ENCODE measurements at regions of chr11 and their contacts with region 1.

Region 1: DNA sequence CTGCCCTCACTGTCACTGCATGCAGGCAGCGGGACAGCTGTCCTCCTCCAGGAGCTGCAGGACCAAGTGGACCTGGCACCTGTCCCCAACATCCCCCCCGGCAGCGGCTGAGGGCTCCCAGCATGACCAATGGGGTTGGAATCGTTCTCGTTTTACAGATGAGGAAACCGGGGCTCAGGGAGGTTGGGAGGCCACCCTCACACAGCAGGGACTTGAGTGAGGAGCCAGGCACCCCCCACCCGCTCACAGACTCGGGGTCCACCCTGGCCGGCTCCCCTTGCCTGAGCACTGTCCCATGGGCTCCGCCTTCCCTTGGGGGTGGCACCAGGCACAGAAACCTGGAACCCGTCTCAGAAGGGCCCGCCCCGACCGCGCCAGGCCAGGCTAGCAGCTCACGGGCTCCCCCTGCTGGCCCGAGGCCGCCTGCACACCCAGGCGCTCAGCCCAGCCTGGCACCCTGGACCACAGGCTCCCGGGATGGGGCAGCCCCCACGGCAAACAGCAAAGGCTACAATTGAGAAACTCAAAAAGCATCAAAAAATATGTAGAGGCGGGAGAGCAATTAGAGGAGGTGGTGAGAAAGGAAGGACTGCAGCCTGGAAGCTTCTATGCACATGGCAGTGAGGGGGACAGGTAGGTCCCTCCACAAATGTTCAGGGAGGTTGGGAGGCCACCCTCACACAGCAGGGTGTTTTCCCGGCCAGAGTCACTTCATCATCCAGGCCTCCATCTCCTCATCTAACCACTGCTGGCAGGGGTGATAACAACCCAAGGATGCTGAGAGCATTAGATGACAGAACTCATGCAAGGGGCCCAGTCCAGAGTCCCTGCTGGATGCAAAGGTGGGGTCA is 12.8 kb downstream of the MACROD1 start:
- DNase-seq: no peak
- H3K4me3 ChIP-seq: no peak overlapping the region
- CTCF ChIP-seq: peak; percentile 99

Region 2: DNA sequence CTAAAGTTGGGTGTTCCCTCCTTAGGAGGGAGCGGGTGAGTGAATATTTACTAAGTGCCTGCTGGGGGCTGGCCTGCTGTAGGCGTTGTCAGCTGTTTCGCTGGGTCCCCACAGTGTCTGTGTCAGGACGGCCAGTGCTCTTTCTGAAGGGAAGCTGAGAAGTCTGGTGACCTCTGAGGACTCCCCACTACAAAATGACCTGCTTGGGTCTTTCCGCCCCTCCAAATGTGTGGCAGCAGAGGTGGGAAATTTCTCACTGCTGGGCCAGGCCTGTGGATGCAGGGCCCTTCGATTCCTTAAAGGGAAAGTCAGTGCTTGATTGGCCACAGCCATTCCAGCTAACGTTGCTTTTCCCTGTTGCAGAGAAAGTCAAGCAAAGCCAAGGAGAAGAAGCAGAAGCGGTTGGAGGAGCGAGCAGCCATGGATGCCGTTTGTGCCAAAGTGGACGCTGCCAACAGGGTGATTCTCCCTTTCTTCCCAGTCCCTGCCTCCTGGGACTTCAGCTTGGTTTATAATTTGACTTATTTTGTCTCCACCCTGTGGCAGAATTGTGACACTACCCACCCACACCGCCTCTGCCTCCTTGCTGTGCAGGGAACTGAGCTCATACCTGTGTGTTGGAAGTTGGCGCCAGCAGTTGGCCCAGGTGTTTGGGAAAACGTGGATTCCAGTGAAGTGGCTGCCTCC is 207.4 kb before region 1 on chr11:
- CTCF ChIA-PET with region 1: interaction called, 11 read pairs
- POLR2A ChIA-PET with region 1: no interaction called
- DNase-seq: peak; percentile 24
- H3K4me3 ChIP-seq: no peak overlapping the region
- CTCF ChIP-seq: peak; percentile 70

Region 3: DNA sequence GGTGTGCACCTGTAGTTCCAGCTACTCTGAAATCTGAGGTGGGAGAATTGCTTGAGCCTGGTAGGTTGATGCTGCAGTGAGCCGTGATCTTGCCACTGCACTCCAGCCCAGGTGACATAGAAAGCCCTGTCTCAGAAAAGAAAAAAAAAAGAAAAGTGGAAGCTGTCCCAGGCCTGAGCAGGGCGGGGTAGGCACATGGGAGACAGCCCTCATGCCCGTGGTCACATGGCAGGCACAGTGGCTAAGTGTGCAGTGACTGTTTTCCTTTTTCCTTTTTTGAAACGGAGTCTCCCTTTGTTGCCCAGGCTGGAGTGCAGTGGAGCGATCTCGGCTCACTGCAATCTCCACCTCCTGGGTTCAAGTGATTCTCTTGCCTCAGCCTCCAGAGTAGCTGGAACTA is 159.1 kb before region 1 on chr11:
- CTCF ChIA-PET with region 1: interaction called, 591 read pairs
- POLR2A ChIA-PET with region 1: no interaction called
- DNase-seq: no peak
- H3K4me3 ChIP-seq: no peak overlapping the region
- CTCF ChIP-seq: no peak

Region 4: GRCh38 chr11:64015935-64016845 is 136.9 kb before region 1 on chr11:
- CTCF ChIA-PET with region 1: interaction called, 12 read pairs
- POLR2A ChIA-PET with region 1: no interaction called
- DNase-seq: no peak
- H3K4me3 ChIP-seq: no peak overlapping the region
- CTCF ChIP-seq: no peak

Region 5: DNA sequence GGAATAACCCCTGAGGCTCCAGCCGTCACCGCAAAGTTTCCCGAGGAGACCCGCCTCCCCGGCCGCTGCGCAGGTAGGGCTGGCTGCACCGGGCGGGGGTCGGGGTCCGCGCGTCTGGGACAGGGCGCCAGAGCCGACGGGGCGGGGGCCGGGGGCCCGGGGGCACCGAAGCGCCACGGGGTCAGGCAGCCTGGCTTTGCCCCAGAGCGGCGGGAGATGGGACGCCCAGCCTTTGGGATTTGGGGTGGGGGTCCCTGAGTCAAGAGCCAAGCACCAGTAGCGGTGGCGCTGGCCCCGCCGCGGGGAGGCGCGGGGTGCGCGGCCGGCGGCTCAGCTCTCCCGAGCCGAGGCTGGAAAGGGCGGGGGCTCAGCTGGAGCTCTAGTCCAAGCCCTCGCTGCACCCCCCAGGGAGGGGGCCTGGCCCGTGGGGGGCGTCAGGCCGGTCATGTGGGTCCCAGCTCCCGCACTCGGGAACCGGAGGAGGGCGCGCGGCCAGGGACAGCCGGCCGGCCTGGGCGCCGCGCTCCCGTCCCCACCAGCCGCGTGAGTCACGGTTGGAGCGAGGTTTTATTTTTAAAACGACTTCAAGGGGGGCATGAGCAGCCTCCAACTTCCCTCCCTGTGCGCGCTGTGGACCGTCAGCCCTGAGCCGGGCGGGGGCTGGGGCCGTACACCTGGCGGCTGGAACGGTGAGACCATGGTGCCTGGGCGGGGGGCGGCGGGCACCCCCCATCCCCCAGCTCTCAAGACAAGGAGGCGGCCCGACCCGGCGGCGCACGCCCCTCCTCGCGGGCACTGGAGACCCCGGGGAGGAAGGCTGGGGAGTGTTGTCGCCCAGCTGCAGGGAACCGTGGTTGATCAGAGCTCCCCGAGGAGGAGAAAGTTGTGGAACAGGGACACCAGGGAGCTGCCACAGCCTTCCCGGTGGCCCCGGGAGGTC is 116.7 kb before region 1 on chr11:
- CTCF ChIA-PET with region 1: interaction called, 60 read pairs
- POLR2A ChIA-PET with region 1: no interaction called
- DNase-seq: no peak
- H3K4me3 ChIP-seq: peak overlapping the region; percentile 54
- CTCF ChIP-seq: no peak

Region 6: GRCh38 chr11:64131683-64132190 is 21.3 kb before region 1 on chr11:
- CTCF ChIA-PET with region 1: interaction called, 67 read pairs
- POLR2A ChIA-PET with region 1: no interaction called
- DNase-seq: no peak
- H3K4me3 ChIP-seq: no peak overlapping the region
- CTCF ChIP-seq: no peak

Region 7: GRCh38 chr11:64165849-64166635 is 13.0 kb after region 1 on chr11 and contains the start of gene MACROD1:
- CTCF ChIA-PET with region 1: interaction called, 96 read pairs
- POLR2A ChIA-PET with region 1: no interaction called
- DNase-seq: no peak
- H3K4me3 ChIP-seq: peak within 1 kb of the TSS; percentile 67
- CTCF ChIP-seq: no peak

Region 8: GRCh38 chr11:64409707-64410403 is 256.8 kb after region 1 on chr11:
- CTCF ChIA-PET with region 1: no interaction called
- POLR2A ChIA-PET with region 1: no interaction called
- DNase-seq: no peak
- H3K4me3 ChIP-seq: no peak overlapping the region
- CTCF ChIP-seq: no peak